ENCODE measurements at regions of chr4 and their contacts with region 1.

Region 1: DNA sequence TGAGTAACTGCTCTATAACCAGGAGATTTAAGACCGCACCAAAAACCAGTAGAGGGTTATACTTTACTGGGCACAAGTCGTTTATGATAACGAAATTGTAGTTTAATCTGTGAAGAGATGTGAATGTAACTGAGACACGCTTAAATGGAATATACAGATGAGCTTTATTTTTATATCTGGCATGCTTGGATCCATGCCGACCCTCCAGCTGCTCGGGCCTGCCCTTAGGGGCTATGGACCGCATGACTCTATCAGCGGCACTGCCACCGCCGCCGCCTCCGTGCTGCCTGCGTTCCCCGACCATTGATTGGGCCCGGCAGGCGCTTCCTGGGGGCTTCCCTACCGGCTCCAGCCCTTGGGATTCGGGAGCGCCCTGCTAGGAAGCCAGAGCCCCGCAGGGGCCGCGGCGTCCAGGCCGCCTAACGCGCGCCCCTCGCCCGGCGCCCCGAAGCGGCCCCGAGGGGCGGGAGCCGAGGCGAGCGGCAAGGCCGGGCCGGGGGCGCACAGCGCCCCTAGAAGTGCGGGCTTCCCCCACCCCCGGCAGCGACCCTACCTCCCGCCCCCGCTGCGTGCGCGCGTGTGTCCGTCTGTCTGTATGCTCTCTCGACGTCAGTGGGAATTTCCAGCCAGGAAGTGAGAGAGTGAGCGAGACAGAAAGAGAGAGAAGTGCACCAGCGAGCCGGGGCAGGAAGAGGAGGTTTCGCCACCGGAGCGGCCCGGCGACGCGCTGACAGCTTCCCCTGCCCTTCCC is at the start of gene NFKB1:
- DNase-seq: peak; percentile 94
- ATAC-seq: peak; percentile 68
- H3K4me3 ChIP-seq: peak within 1 kb of the TSS; percentile 88 to 99 (median 97)
- H3K4me3 Mint-ChIP-seq: peak within 1 kb of the TSS; percentile 98
- H3K27ac ChIP-seq: peak within 1 kb of the TSS; percentile 99
- H3K27ac Mint-ChIP-seq: peak within 1 kb of the TSS; percentile 95
- H3K4me1 ChIP-seq: peaks cover 17 to 33% of the 10 kb centered on the region in 2 donors
- H3K4me1 Mint-ChIP-seq: peaks cover 36% of the 10 kb centered on the region
- H3K27me3 ChIP-seq: no peaks in the 10 kb centered on the region
- H3K27me3 Mint-ChIP-seq: no peaks in the 10 kb centered on the region
- CTCF ChIP-seq: peak; percentile 3
- total RNA-seq, gene NFKB1: 88.1 and 96.4 TPM in 2 replicates

Region 2: DNA sequence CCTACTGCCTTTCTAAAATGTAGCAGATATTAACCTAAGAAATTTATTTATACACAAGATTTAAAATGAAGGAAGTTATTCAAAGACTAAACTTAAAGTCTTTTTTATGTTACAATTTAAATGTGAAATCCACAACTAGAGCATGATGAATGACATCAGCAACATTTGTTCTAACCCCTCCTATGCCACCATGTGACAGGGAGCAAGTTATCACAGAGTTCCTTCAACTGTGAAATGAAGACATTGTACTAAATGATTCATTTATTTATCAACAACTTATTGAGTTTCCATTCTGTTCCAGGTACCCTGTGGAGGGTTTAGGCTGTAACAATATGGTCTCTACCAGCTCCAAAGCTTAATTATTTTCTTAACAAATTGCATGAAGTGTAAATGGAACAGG is 232.5 kb before region 1 on chr4:
- CTCF ChIA-PET with region 1: no interaction called
- POLR2A ChIA-PET with region 1: no interaction called
- intact Hi-C with region 1: no loop called
- DNase-seq: no peak
- ATAC-seq: no peak
- H3K4me3 ChIP-seq: no peak overlapping the region
- H3K4me3 Mint-ChIP-seq: no peak overlapping the region
- H3K27ac ChIP-seq: no peak overlapping the region
- H3K27ac Mint-ChIP-seq: no peak overlapping the region
- H3K4me1 ChIP-seq: no peaks in the 10 kb centered on the region
- H3K4me1 Mint-ChIP-seq: no peaks in the 10 kb centered on the region
- H3K27me3 ChIP-seq: no peaks in the 10 kb centered on the region
- H3K27me3 Mint-ChIP-seq: no peaks in the 10 kb centered on the region
- CTCF ChIP-seq: no peak

Region 3: DNA sequence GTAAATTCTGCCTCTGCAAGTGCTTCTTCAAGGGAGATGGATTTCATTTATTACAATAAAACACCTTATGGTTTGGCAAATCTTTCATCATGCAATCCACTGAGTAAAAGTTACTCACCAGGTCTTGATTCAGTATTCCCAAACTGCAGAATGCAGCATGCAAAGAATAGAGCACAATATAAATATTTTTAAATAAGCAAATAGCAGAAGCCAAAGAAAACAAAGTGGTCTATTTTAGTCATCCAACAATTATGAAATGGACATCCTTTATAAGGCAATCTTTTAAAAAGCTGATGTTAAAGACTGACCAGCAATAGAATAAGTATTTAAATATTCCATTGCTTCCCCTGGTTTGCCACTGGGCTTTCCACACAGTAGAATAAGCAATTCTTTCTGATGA is 215.0 kb before region 1 on chr4:
- CTCF ChIA-PET with region 1: no interaction called
- POLR2A ChIA-PET with region 1: no interaction called
- intact Hi-C with region 1: no loop called
- DNase-seq: no peak
- ATAC-seq: no peak
- H3K4me3 ChIP-seq: no peak overlapping the region
- H3K4me3 Mint-ChIP-seq: no peak overlapping the region
- H3K27ac ChIP-seq: no peak overlapping the region
- H3K27ac Mint-ChIP-seq: no peak overlapping the region
- H3K4me1 ChIP-seq: no peaks in the 10 kb centered on the region
- H3K4me1 Mint-ChIP-seq: no peaks in the 10 kb centered on the region
- H3K27me3 ChIP-seq: no peaks in the 10 kb centered on the region
- H3K27me3 Mint-ChIP-seq: no peaks in the 10 kb centered on the region
- CTCF ChIP-seq: no peak

Region 4: DNA sequence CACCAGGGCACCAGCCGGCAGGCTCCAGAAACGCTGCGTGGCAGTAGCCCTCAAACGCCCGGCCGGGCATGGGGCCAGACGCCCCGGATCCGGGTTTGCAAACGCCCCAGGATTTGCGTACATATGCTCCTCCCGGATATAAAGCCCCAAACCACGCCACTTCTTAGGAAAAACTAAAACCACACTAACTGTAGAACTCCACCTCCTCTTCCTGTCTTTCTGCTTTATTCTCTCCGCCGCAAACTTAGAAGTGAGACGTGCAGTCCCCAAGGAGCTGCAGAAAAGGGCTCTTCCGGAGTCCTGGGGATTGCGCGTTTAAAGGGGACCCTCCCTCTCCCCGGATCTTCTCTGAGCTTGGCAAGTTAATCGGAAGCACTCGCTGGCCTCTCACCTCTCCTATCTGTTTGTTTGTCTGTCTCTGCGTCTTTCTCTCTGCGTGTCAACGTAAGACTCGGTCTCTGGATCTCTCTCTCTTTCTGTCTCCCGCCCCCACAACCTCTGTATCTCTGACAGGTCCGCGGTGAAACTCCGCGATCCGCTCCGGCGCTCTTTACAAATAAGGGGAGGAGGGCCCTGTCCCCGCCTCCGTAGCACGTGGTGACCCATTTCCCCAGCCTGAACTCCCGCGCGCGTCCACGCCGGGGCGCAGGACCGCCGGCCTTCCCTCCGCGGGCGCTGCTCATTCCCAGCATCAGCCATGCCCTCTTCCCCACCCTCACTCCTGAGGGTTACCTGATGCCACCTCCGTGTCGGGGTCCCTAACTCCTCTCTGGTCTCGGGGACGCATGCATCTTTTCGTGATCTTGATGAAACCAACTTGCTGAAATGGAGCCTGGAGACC is 155.7 kb before region 1 on chr4 and contains the start of gene SLC39A8:
- CTCF ChIA-PET with region 1: no interaction called
- POLR2A ChIA-PET with region 1: no interaction called
- intact Hi-C with region 1: loop called (anchors 2 kb)
- DNase-seq: peak; percentile 93
- ATAC-seq: peak; percentile 88
- H3K4me3 ChIP-seq: peak within 1 kb of the TSS; percentile 75 to 91 (median 84)
- H3K4me3 Mint-ChIP-seq: peak within 1 kb of the TSS; percentile 87
- H3K27ac ChIP-seq: peak within 1 kb of the TSS; percentile 88 to 90
- H3K27ac Mint-ChIP-seq: peak within 1 kb of the TSS; percentile 90
- H3K4me1 ChIP-seq: peaks cover 21 to 23% of the 10 kb centered on the region in 2 donors
- H3K4me1 Mint-ChIP-seq: peaks cover 24% of the 10 kb centered on the region
- H3K27me3 ChIP-seq: no peaks in the 10 kb centered on the region
- H3K27me3 Mint-ChIP-seq: no peaks in the 10 kb centered on the region
- CTCF ChIP-seq: peak; percentile 91
- total RNA-seq, gene SLC39A8: 8.4 and 10.2 TPM in 2 replicates

Region 5: GRCh38 chr4:102518703-102519131 is 17.8 kb after region 1 on chr4:
- CTCF ChIA-PET with region 1: interaction called, 4 read pairs
- POLR2A ChIA-PET with region 1: no interaction called
- intact Hi-C with region 1: loop called (anchors 2 kb)
- DNase-seq: no peak
- ATAC-seq: no peak
- H3K4me3 ChIP-seq: no peak overlapping the region
- H3K4me3 Mint-ChIP-seq: no peak overlapping the region
- H3K27ac ChIP-seq: no peak overlapping the region
- H3K27ac Mint-ChIP-seq: no peak overlapping the region
- H3K4me1 ChIP-seq: peaks cover 9 to 30% of the 10 kb centered on the region in 2 donors
- H3K4me1 Mint-ChIP-seq: peaks cover 66% of the 10 kb centered on the region
- H3K27me3 ChIP-seq: no peaks in the 10 kb centered on the region
- H3K27me3 Mint-ChIP-seq: no peaks in the 10 kb centered on the region
- CTCF ChIP-seq: no peak

Region 6: GRCh38 chr4:102598086-102598761 is 97.4 kb after region 1 on chr4:
- CTCF ChIA-PET with region 1: no interaction called
- POLR2A ChIA-PET with region 1: interaction called, 11 read pairs
- intact Hi-C with region 1: no loop called
- DNase-seq: no peak
- ATAC-seq: no peak
- H3K4me3 ChIP-seq: no peak overlapping the region
- H3K4me3 Mint-ChIP-seq: no peak overlapping the region
- H3K27ac ChIP-seq: no peak overlapping the region
- H3K27ac Mint-ChIP-seq: peak overlapping the region; percentile 80
- H3K4me1 ChIP-seq: no peaks in the 10 kb centered on the region
- H3K4me1 Mint-ChIP-seq: peaks cover 17% of the 10 kb centered on the region
- H3K27me3 ChIP-seq: no peaks in the 10 kb centered on the region
- H3K27me3 Mint-ChIP-seq: no peaks in the 10 kb centered on the region
- CTCF ChIP-seq: no peak

Region 7: GRCh38 chr4:102868781-102869568 is 368.1 kb after region 1 on chr4 and contains the start of gene CISD2:
- CTCF ChIA-PET with region 1: no interaction called
- POLR2A ChIA-PET with region 1: no interaction called
- intact Hi-C with region 1: loop called (anchors 5 kb)
- DNase-seq: peak; percentile 95
- ATAC-seq: peak; percentile 87
- H3K4me3 ChIP-seq: peak within 1 kb of the TSS; percentile 75 to 89 (median 84)
- H3K4me3 Mint-ChIP-seq: peak within 1 kb of the TSS; percentile 93
- H3K27ac ChIP-seq: peak within 1 kb of the TSS; percentile 97
- H3K27ac Mint-ChIP-seq: peak within 1 kb of the TSS; percentile 97
- H3K4me1 ChIP-seq: peaks cover 22 to 23% of the 10 kb centered on the region in 2 donors
- H3K4me1 Mint-ChIP-seq: peaks cover 52% of the 10 kb centered on the region
- H3K27me3 ChIP-seq: no peaks in the 10 kb centered on the region
- H3K27me3 Mint-ChIP-seq: no peaks in the 10 kb centered on the region
- CTCF ChIP-seq: no peak
- total RNA-seq, gene CISD2: 15.1 and 16.0 TPM in 2 replicates

Region 8: GRCh38 chr4:103099691-103100392 is 599.0 kb after region 1 on chr4 and contains the start of gene BDH2:
- CTCF ChIA-PET with region 1: no interaction called
- POLR2A ChIA-PET with region 1: no interaction called
- intact Hi-C with region 1: loop called (anchors 5 kb)
- DNase-seq: peak; percentile 86
- ATAC-seq: peak; percentile 99
- H3K4me3 ChIP-seq: peak within 1 kb of the TSS; percentile 30 to 72 (median 59)
- H3K4me3 Mint-ChIP-seq: peak within 1 kb of the TSS; percentile 89
- H3K27ac ChIP-seq: peak within 1 kb of the TSS in 1 of 2 donors; percentile 23
- H3K27ac Mint-ChIP-seq: peak within 1 kb of the TSS; percentile 84
- H3K4me1 ChIP-seq: peaks cover 8 to 11% of the 10 kb centered on the region in 2 donors
- H3K4me1 Mint-ChIP-seq: peaks cover 13% of the 10 kb centered on the region
- H3K27me3 ChIP-seq: no peaks in the 10 kb centered on the region
- H3K27me3 Mint-ChIP-seq: no peaks in the 10 kb centered on the region
- CTCF ChIP-seq: peak; percentile 85
- total RNA-seq, gene BDH2: 8.8 and 12.6 TPM in 2 replicates